AG04450 (cell line): ENCODE measurements at regions of chr15 and their contacts with region 1.

Region 1: DNA sequence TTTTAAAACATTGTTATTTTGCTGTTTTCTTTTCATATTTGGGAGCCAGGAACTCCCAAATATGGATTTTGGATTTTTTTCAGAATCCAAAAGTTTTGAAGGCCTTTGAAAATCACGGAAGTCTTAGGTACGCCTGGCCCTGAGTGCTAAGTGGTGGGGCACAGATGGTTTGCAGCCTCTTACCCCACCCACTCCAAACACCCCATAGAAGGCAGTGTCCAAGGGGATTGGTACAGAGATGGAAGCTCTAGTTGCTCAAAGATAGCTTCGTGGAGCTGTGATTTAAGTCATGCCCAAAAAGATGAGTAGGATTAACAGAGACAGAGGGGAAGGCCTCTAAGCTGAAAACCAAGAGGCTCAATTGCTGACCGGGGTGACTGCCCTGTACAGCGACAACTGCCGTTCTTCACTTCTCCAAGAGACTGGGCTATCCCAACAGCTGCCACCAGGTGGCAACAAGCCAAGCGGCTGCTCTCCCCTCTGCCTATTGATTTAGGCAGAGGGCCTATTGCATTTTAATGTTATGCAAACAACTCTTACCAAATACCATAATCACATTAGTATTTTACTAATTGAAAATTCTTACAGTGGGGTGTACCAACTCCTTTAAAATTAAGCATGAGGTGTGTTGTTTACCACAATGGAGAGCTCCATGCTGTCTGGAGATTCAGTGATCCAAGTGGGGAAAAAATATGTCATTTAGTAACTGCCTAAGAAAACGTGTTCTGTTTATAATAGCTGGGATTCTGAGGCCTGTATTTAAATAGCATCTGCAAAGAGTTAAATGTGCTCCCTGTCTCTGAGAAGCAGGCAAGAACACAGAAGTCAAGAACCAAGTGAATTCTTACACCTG is 64.0 kb upstream of the C15orf61 start:
- DNase-seq: peak; percentile 21
- H3K4me3 ChIP-seq: no peak overlapping the region
- H3K27ac ChIP-seq: no peak overlapping the region
- H3K27me3 ChIP-seq: peaks cover 9% of the 10 kb centered on the region
- CTCF ChIP-seq: peak; percentile 93

Region 2: GRCh38 chr15:67296188-67296587 is 160.7 kb before region 1 on chr15:
- CTCF ChIA-PET with region 1: no interaction called
- POLR2A ChIA-PET with region 1: no interaction called
- DNase-seq: no peak
- H3K4me3 ChIP-seq: no peak overlapping the region
- H3K27ac ChIP-seq: no peak overlapping the region
- H3K27me3 ChIP-seq: no peaks in the 10 kb centered on the region
- CTCF ChIP-seq: no peak

Region 3: GRCh38 chr15:67322481-67322880 is 134.4 kb before region 1 on chr15:
- CTCF ChIA-PET with region 1: no interaction called
- POLR2A ChIA-PET with region 1: no interaction called
- DNase-seq: no peak
- H3K4me3 ChIP-seq: no peak overlapping the region
- H3K27ac ChIP-seq: no peak overlapping the region
- H3K27me3 ChIP-seq: no peaks in the 10 kb centered on the region
- CTCF ChIP-seq: no peak

Region 4: GRCh38 chr15:67444100-67444499 is 12.8 kb before region 1 on chr15:
- CTCF ChIA-PET with region 1: interaction called, 14 read pairs
- POLR2A ChIA-PET with region 1: no interaction called
- DNase-seq: no peak
- H3K4me3 ChIP-seq: no peak overlapping the region
- H3K27ac ChIP-seq: no peak overlapping the region
- H3K27me3 ChIP-seq: peaks cover 7% of the 10 kb centered on the region
- CTCF ChIP-seq: no peak

Region 5: GRCh38 chr15:67472957-67473356 is 16.1 kb after region 1 on chr15:
- CTCF ChIA-PET with region 1: interaction called, 23 read pairs
- POLR2A ChIA-PET with region 1: no interaction called
- DNase-seq: peak; percentile 29
- H3K4me3 ChIP-seq: no peak overlapping the region
- H3K27ac ChIP-seq: no peak overlapping the region
- H3K27me3 ChIP-seq: no peaks in the 10 kb centered on the region
- CTCF ChIP-seq: no peak

Region 6: GRCh38 chr15:67833710-67834511 is 377.0 kb after region 1 on chr15:
- CTCF ChIA-PET with region 1: interaction called, 52 read pairs
- POLR2A ChIA-PET with region 1: no interaction called
- DNase-seq: no peak
- H3K4me3 ChIP-seq: peak overlapping the region; percentile 13; the same call in 1 of the 2 replicates
- H3K27ac ChIP-seq: no peak overlapping the region
- H3K27me3 ChIP-seq: peaks cover 78% of the 10 kb centered on the region
- CTCF ChIP-seq: peak; percentile 59

Region 7: GRCh38 chr15:67839929-67840748 is 383.2 kb after region 1 on chr15 and contains the start of gene RNU6-1:
- CTCF ChIA-PET with region 1: interaction called, 52 read pairs
- POLR2A ChIA-PET with region 1: no interaction called
- DNase-seq: peak; percentile 84
- H3K4me3 ChIP-seq: peak within 1 kb of the TSS; percentile 92
- H3K27ac ChIP-seq: peak within 1 kb of the TSS; percentile 85
- H3K27me3 ChIP-seq: peaks cover 17% of the 10 kb centered on the region
- CTCF ChIP-seq: no peak
- polyA plus RNA-seq, gene RNU6-1: not detected in 2 replicates